Tibial artery (tissue), 4 donors: ENCODE measurements at regions of chrX and their contacts with region 1.

Region 1: GRCh38 chrX:38336538-38337240 is 9.4 kb upstream of the RPGR start:
- DNase-seq: no peak
- H3K4me3 ChIP-seq: no peak overlapping the region
- H3K27ac ChIP-seq: no peak overlapping the region
- H3K4me1 ChIP-seq: no peaks in the 10 kb centered on the region
- H3K27me3 ChIP-seq: no peaks in the 10 kb centered on the region
- CTCF ChIP-seq: no peak

Region 2: GRCh38 chrX:38379088-38379487 is 42.4 kb after region 1 on chrX:
- intact Hi-C with region 1: loop called (anchors 1 kb)
- DNase-seq: no peak
- H3K4me3 ChIP-seq: no peak overlapping the region
- H3K27ac ChIP-seq: no peak overlapping the region
- H3K4me1 ChIP-seq: no peaks in the 10 kb centered on the region
- H3K27me3 ChIP-seq: no peaks in the 10 kb centered on the region
- CTCF ChIP-seq: no peak